OCI-LY7 (cell line): ENCODE measurements at regions of chr16 and their contacts with region 1.

Region 1: GRCh38 chr16:2235695-2236336 is 428 bp upstream of the DNASE1L2 start:
- DNase-seq: no peak
- H3K4me3 ChIP-seq: no peak overlapping the region
- H3K27ac ChIP-seq: no peak overlapping the region
- H3K4me1 ChIP-seq: no peaks in the 10 kb centered on the region
- CTCF ChIP-seq: no peak

Region 2: GRCh38 chr16:2251483-2252240 is 15.8 kb after region 1 on chr16 and contains the start of gene ECI1:
- CTCF ChIA-PET with region 1: interaction called, 16 read pairs
- POLR2A ChIA-PET with region 1: interaction called, 3 read pairs
- intact Hi-C with region 1: no loop called
- DNase-seq: peak; percentile 95
- H3K4me3 ChIP-seq: peak within 1 kb of the TSS; percentile 76
- H3K27ac ChIP-seq: peak within 1 kb of the TSS; percentile 68
- H3K4me1 ChIP-seq: peaks cover 17% of the 10 kb centered on the region
- CTCF ChIP-seq: peak; percentile 73
- total RNA-seq, gene ECI1: 66.6 and 80.0 TPM in 2 replicates